HEK293T (cell line): ENCODE measurements at regions of chr20 and their contacts with region 1.

Region 1: DNA sequence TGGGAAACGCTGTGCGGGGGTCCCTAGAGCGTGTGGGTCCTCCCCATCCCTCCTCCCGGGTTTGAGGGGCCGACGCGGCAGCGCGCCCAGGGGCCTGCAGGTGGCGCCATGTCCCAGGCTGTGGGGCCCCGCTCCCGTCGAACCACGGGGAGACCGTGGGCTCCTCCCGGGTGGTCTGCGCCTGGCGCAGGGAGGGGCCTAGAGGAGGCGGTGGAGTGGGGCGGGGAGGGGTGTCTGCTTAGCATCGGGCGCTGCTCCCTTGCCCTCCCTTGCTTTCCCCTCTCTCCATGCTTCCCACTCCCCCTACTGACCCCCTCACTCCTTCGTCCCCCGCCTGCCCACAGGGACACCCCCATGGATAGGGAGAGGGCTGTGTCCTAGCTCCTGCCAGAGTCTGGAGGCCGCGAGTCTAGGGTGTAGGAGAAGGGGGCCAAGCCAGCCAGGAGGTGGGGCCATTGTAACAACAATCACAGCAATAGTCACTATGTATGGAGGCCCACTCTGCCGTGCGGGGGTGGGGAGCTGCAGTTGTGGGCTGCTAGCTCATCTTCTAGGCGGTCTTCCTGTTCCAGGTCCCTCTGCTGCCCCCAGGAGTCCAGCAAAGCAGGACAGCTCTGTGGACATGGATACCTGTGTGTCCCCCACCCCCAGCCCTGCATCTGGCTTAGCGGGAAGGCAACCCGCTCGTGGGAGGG is 51.7 kb downstream of the CHMP4B start:
- DNase-seq: peak; percentile 88

Region 2: GRCh38 chr20:33984182-33984719 is 121.4 kb after region 1 on chr20:
- CTCF ChIA-PET with region 1: no interaction called
- POLR2A ChIA-PET with region 1: no interaction called
- DNase-seq: no peak

Region 3: GRCh38 chr20:34069341-34070078 is 206.7 kb after region 1 on chr20:
- CTCF ChIA-PET with region 1: interaction called, 11 read pairs
- POLR2A ChIA-PET with region 1: no interaction called
- DNase-seq: peak; percentile 74